ENCODE measurements at regions of chr19 and their contacts with region 1.

Region 1: DNA sequence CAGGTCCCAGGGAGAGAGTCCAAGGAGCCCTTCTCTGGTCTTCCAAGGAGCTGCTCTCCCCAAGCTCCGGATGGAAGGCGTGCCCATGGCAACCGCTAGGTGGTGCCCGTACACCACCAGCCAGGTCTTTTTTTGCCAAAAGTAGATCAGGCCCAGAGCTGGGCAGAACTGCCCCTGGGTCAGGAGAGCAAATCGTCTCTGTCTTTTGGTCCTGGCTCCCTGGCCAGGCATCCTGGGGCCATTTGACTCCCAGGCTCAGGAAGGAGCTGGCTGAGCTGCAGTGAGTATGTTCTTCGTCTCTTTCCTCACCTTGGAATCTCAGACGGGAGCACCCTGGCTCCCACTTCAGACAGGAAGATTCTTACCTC is 24.6 kb upstream of the BCL3 start:
- DNase-seq: peak; percentile 88 to 92
- ATAC-seq: peak; percentile 91
- H3K4me3 ChIP-seq: no peak overlapping the region
- H3K27ac ChIP-seq: no peak overlapping the region
- H3K4me1 ChIP-seq: no peaks in the 10 kb centered on the region
- H3K27me3 ChIP-seq: no peaks in the 10 kb centered on the region

Region 2: GRCh38 chr19:44689056-44689895 is 34.7 kb before region 1 on chr19:
- intact Hi-C with region 1: loop called (anchors 2 to 5 kb)
- DNase-seq: peak; percentile 84 to 92
- ATAC-seq: peak; percentile 75
- H3K4me3 ChIP-seq: no peak overlapping the region
- H3K27ac ChIP-seq: no peak overlapping the region
- H3K4me1 ChIP-seq: no peaks in the 10 kb centered on the region
- H3K27me3 ChIP-seq: no peaks in the 10 kb centered on the region

Region 3: GRCh38 chr19:44741841-44742352 is 18.0 kb after region 1 on chr19:
- intact Hi-C with region 1: loop called in 1 of 2 experiments (anchors 2 kb)
- DNase-seq: peak; percentile 99
- ATAC-seq: peak; percentile 96
- H3K4me3 ChIP-seq: no peak overlapping the region
- H3K27ac ChIP-seq: peak overlapping the region in 1 of 2 donors; percentile 81
- H3K4me1 ChIP-seq: no peaks in the 10 kb centered on the region
- H3K27me3 ChIP-seq: no peaks in the 10 kb centered on the region

Region 4: DNA sequence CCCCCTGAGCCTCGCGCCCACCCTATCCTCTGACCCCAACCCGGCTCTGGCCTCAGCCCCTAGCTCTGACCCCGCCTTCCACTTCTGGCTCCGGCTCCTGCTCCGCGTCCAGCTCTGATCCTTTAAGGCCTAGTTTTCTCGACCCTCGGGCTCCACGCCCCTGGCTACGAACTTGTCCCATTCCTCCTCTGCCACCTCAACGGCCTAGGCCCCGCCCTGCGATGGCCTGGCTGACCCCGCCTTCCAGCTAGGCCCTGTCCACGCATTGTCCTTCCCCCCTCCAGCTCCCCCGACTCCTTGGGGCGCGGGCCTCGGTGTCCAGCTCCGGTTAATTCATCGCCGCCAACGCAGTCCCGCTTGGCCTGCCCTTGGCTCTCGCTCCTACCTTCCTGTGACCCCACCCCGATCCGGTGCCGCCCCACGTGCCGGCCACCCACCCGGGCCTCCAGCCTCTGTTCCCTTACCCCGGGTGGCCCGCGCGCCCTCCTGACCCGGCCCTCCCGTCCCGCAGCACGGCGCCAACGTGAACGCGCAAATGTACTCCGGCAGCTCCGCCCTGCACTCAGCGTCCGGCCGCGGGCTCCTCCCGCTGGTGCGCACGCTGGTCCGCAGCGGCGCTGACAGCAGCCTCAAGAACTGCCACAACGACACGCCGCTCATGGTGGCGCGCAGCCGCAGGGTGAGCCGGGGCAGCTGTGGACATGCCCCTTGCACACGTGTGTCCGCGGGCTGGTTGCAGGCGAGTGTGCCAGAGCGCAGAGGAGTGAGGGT is 34.0 kb after region 1 on chr19:
- intact Hi-C with region 1: loop called in 1 of 2 experiments (anchors 5 kb)
- DNase-seq: peak; percentile 82 to 93
- ATAC-seq: peak; percentile 86
- H3K4me3 ChIP-seq: peak overlapping the region; percentile 1 to 15
- H3K27ac ChIP-seq: peak overlapping the region in 1 of 2 donors; percentile 56
- H3K4me1 ChIP-seq: no peaks in the 10 kb centered on the region
- H3K27me3 ChIP-seq: no peaks in the 10 kb centered on the region

Region 5: DNA sequence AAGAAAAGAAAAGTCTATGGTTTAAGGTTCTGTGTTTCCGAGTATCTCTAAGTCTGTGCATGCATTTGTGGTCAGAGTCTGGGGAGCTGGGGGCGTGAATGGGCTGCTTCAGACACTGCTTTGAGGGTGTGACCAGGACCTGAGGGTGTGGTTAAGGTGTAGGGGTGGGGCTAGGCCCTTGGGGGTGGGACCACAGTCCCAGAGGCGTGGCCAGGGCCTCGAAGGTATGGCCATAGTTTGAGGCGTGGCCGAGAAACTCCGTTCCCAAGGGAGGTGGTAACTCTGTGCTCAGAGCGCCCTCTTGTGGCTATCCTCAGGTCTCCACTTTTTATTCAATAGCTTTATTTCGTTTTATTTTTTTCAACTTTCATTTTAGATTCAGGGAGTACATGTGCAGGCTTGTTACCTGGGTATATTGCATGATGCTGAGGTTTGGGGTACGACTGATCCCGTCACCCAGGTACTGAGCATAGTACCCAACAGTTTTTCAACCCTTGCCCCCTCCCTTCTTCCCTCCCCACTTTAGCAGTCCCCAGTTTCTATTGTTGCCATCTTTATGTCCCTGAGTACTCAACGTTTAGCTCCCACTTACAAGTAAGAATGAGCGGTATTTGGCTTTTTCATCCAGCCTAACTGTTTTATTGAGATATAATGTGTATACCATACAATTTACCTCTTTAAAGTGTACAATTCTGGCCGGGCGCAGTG is 46.8 kb after region 1 on chr19:
- intact Hi-C with region 1: loop called (anchors 1 to 2 kb)
- DNase-seq: peak; percentile 95 to 96
- ATAC-seq: peak; percentile 94
- H3K4me3 ChIP-seq: no peak overlapping the region
- H3K27ac ChIP-seq: no peak overlapping the region
- H3K4me1 ChIP-seq: no peaks in the 10 kb centered on the region
- H3K27me3 ChIP-seq: no peaks in the 10 kb centered on the region

Region 6: DNA sequence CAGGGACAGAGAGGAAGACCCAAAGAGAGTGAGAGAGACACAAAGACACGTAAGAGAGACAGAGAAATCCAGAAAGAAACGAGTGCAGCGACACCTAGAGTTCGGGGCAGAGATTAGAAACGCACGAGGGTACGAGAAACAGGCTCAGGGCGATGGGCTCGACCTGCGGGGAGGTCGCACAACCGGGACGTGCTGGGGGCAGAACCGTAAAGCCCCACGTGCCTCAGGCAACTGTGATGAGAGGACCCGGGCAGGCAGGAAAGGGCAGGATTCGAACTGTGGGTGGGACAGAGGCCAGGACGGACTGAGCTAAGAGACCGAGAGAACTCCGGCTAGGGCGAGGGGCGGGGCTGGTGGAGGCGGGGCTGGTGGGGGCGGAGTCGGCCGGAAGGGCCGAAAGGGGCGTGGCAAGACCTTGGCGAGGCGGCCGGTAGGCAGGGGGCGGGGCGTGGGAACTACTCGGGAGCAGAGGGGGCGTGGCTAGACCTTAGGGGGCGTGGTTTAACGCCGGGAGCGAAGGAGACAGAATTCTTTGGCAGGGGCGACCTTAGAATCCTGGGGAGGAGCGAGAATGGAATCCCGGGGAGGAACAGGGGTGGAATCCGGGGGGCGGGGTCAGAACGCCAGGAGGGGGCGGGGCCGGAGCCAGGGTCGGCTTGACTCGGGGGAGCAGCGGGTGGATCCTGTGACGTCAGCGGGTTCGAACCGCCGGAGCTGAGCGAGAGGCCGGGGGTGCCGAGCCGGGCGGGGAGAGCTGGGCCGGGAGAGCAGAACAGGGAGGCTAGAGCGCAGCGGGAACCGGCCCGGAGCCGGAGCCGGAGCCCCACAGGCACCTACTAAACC is 121.9 kb after region 1 on chr19 and contains the start of gene NECTIN2:
- intact Hi-C with region 1: loop called in 1 of 2 experiments (anchors 5 kb)
- DNase-seq: peak; percentile 100
- ATAC-seq: peak; percentile 93
- H3K4me3 ChIP-seq: peak within 1 kb of the TSS; percentile 76 to 88
- H3K27ac ChIP-seq: peak within 1 kb of the TSS; percentile 51 to 80
- H3K4me1 ChIP-seq: no peaks in the 10 kb centered on the region
- H3K27me3 ChIP-seq: no peaks in the 10 kb centered on the region
- total RNA-seq, gene NECTIN2: 88.2 to 97.8 TPM

Measured in aorta (tissue), 5 donors.